Lower leg skin (tissue), 4 donors: ENCODE measurements at regions of chr3 and their contacts with region 1.

Region 1: GRCh38 chr3:195522254-195523023 is 20.7 kb downstream of the PPP1R2 start:
- DNase-seq: no peak
- H3K4me3 ChIP-seq: no peak overlapping the region
- CTCF ChIP-seq: peak in 2 of 3 donors; percentile 29 to 76
- POLR2A ChIP-seq: no peak

Region 2: GRCh38 chr3:195271116-195271858 is 251.2 kb before region 1 on chr3 and contains the start of gene XXYLT1:
- intact Hi-C with region 1: loop called (anchors 2 kb)
- DNase-seq: peak; percentile 83 to 97
- H3K4me3 ChIP-seq: peak within 1 kb of the TSS; percentile 51
- CTCF ChIP-seq: peak in 1 of 3 donors; percentile 86
- POLR2A ChIP-seq: no peak
- total RNA-seq, gene XXYLT1: 9.7 to 30.1 (median 17.7) TPM

Region 3: DNA sequence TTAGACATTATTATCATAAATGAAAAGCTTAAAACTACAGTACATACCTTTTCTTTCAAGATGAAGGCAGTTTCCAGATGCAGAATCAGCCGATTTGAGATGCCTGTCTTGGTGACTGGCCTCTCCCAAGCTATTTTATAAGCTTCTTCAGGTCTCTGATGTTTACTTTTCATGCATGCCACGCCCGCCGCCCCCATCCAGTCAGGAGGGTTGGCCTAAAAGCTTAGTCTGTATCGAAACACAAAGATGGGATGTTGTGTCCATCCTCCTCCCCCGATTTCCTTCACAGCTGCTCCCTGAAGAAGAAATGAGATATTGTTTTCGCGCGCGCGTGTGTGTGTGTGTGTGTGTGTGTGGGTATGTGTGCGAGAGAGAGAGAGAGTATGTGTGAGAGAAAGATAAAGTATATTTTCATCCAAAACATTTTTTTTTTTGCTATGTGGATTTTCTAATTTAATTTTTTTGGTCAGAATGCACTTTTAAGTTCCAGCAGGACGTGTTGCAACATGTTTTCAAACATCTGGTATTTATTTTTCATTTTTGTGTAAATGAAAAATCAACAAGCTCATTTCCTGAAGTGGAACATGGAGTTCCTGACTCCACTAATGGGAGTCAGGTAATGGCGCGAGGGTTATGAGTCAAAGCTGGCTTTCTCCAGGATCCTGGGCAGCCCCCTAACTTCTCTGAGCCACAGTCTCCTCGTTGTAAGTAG is 61.5 kb after region 1 on chr3 and contains the start of gene APOD:
- intact Hi-C with region 1: no loop called
- DNase-seq: peak; percentile 87 to 93
- H3K4me3 ChIP-seq: peak within 1 kb of the TSS; percentile 25
- CTCF ChIP-seq: no peak
- POLR2A ChIP-seq: no peak
- total RNA-seq, gene APOD: 201 to 766 (median 373) TPM

Region 4: GRCh38 chr3:195774917-195775316 is 252.5 kb after region 1 on chr3:
- intact Hi-C with region 1: no loop called
- DNase-seq: no peak
- H3K4me3 ChIP-seq: no peak overlapping the region
- CTCF ChIP-seq: no peak
- POLR2A ChIP-seq: no peak